Posterior vena cava (tissue), 2 donors: ENCODE measurements at regions of chr3 and their contacts with region 1.

Region 1: DNA sequence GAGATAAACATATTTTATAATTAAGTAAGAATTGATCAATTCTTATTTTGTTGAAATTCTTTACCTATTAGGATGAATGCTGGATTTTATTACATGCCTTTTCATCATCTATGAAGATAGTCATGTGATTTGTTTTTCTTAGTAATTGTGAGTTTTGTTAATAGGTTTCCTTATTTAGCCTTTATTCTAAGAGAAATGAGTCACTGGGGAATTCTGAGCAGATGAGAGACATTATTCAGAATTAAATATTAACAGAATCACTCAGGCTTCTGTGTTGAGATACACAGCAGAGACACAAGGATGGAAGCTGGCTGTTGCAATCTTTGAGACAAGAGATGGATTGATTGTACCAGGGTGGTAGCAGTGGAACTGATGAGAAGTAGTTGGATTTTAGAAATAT is 7.4 kb upstream of the ANO10 start:
- DNase-seq: no peak

Region 2: GRCh38 chr3:42660893-42661292 is 968.4 kb before region 1 on chr3:
- intact Hi-C with region 1: loop called in 1 of 2 experiments (anchors 5 kb)
- DNase-seq: no peak

Region 3: DNA sequence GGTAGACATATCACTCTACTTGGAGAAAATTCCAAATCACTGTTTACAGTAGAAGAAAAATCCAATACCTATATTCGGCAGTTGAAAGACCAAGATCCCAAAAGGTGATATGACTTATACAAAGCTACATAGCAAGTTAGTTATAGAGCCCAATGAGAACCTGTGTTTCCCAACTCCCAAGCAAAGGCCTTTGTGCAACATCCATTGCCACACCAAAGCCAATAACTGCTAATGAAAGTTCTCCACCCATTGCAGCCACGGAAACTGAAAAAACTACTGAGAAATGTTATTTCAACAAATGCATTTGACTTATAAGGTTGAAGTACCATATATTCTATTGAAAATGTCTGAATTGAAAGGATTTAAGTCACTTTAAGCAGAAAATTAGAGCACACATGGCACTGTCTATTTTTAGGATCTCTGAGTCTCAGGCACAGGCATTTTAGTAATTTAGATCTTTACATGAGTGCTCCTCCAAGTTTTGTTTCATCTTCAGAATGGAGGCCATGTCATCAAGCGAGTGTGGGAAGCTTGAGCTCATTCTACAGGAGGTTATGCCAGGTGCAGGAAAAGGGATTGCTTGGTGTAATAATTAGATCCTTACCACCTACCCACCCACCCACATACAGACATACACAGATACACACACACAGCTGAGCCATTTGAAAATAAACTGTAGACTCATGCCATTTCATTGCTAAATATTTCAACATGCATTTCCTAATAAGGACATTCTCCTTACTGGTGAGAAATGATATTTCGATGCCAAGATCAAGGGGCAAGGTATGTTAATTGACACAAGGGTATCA is 12.3 kb after region 1 on chr3:
- intact Hi-C with region 1: no loop called
- DNase-seq: no peak